IMR-90 (cell line): ENCODE measurements at regions of chr4 and their contacts with region 1.

Region 1: DNA sequence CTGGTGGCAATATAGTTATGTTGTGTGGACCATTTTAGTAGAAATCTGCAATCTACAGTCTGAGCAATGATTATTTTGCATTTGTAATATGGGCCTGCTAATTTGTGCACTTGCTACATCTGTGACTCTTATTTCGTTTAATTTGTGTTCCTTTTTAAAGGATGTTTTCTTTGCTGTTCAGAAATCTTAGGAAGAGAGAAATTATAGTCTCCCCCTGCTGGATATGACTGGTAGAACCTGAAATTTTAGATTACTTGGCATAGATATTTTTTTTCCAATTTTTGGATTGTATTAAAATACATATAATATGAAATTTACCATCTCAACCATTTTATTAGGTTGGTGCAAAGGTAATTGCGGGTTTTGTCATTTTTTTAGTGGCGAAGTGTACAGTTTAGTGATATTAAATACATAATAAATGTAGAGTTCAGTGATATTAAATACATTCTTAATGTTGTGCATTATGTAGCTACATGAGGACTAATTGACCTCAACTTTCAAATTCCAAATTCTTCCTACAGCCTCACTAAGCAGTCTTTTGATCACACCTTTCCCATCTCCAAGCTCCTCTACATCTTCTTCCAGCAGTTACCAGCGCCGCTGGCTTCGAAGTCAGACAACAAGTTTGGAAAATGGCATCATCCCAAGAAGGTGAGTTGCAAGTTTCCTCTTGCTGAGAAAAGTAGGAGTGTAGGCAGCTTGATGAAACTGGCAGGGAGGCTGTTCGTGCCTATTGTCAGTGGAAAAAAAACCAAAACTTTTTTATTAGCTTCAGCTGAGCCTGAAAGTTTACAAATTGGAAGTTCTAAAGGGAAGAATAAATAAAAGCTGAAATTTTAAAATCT is 82.2 kb downstream of the FNIP2 start:
- DNase-seq: peak; percentile 44
- ATAC-seq: peak; percentile 48; the same call in 1 of the 2 replicates
- H3K4me3 ChIP-seq: no peak overlapping the region
- H3K27ac ChIP-seq: no peak overlapping the region
- H3K4me1 ChIP-seq: no peaks in the 10 kb centered on the region
- H3K27me3 ChIP-seq: no peaks in the 10 kb centered on the region
- CTCF ChIP-seq: peak; percentile 79
- POLR2A ChIP-seq: no peak
- RAD21 ChIP-seq: peak; percentile 68

Region 2: DNA sequence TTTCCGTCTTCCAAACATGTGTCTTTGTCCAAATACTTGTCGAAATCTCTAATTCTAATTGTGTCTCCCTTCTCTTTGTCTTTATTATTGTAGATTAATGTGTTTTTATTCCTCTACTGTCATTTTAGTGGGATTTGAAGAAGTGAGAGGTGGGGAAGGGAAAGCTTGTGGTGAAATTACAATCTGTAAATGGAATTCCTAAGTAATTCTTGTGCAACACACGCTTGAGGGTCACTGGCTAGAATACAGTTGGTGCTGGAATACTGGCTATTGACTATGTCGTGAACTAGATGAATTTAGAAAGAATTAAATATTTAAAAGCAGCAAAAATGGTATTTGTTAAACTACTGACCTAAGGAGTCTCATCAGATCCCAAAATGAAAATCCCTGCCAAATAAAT is 92.9 kb before region 1 on chr4:
- CTCF ChIA-PET with region 1: no interaction called
- POLR2A ChIA-PET with region 1: no interaction called
- dilution Hi-C with region 1: no loop called
- in situ Hi-C with region 1: no loop called
- intact Hi-C with region 1: no loop called
- DNase-seq: peak; percentile 54
- ATAC-seq: no peak
- H3K4me3 ChIP-seq: no peak overlapping the region
- H3K27ac ChIP-seq: no peak overlapping the region
- H3K4me1 ChIP-seq: peaks cover 7% of the 10 kb centered on the region; the same call in 1 of the 2 replicates
- H3K27me3 ChIP-seq: no peaks in the 10 kb centered on the region
- CTCF ChIP-seq: no peak
- POLR2A ChIP-seq: no peak
- RAD21 ChIP-seq: no peak

Region 3: GRCh38 chr4:158768555-158769174 is 82.4 kb before region 1 on chr4 and contains the start of gene FNIP2:
- CTCF ChIA-PET with region 1: interaction called, 4 read pairs
- POLR2A ChIA-PET with region 1: no interaction called
- dilution Hi-C with region 1: no loop called
- in situ Hi-C with region 1: no loop called
- intact Hi-C with region 1: loop called (anchors 1 kb)
- DNase-seq: peak; percentile 72
- ATAC-seq: peak; percentile 98
- H3K4me3 ChIP-seq: peak within 1 kb of the TSS; percentile 99
- H3K27ac ChIP-seq: peak within 1 kb of the TSS; percentile 87
- H3K4me1 ChIP-seq: peaks cover 1% of the 10 kb centered on the region; the same call in 1 of the 2 replicates
- H3K27me3 ChIP-seq: no peaks in the 10 kb centered on the region
- CTCF ChIP-seq: no peak
- POLR2A ChIP-seq: peak; percentile 80
- RAD21 ChIP-seq: no peak
- total RNA-seq, gene FNIP2: 22.2 and 24.6 TPM in 2 replicates